HepG2 (cell line): ENCODE measurements at regions of chr14 and their contacts with region 1.

Region 1: DNA sequence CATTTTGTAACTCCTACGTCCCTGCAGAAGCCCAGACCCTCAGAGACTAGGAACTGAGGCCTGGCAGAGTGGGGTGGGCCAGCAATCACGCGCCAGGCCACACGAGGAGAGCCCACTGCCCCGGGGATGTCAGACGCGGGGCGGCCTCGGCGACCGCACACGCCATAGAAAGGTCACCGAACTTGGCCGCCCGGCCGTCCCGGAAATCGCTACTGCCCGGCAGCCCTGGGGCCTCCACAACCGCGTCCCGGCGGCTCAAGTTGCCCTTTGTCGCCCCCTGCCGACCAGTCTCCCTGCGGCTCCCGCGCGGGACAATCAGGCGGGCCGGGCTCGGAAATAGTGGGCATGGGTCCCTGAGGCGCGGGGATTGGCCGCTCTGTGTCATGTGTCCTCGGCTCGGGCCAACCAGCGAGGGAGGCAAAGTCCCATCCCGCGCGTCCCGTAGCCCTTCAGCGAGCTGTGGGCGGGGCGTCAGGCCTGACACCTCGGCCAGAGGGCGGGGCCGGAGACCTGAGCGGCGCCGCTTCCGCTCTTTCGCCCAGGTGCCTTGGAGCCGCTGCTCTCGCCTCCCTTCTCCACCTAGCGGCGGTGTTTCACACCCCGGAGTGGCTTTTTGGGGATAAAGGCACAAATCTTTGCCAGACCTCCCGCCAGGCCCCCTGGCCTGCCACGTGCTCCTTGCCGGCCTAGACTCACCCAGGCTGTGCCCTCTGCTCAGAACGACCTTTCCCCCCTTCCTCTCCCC is 33.4 kb upstream of the DEGS2 start:
- DNase-seq: peak; percentile 96
- ATAC-seq: peak; percentile 98
- H3K4me3 ChIP-seq: peak overlapping the region; percentile 64 to 80 (median 64)
- H3K27ac ChIP-seq: peak overlapping the region; percentile 76
- H3K4me1 ChIP-seq: peaks cover 45% of the 10 kb centered on the region
- H3K27me3 ChIP-seq: no peaks in the 10 kb centered on the region
- CTCF ChIP-seq: peak; percentile 93
- EP300 ChIP-seq: peak in 1 of 2 experiments; percentile 9; a peak in 1 of 4 replicates
- POLR2A ChIP-seq: peak; percentile 67 to 72
- RAD21 ChIP-seq: peak; percentile 97

Region 2: GRCh38 chr14:100140452-100141078 is 52.3 kb before region 1 on chr14:
- CTCF ChIA-PET with region 1: interaction called, 10 read pairs
- POLR2A ChIA-PET with region 1: interaction called, 10 read pairs
- in situ Hi-C with region 1: loop called (anchors 5 kb)
- intact Hi-C with region 1: loop called (anchors 1 kb)
- DNase-seq: peak; percentile 82
- ATAC-seq: peak; percentile 73
- H3K4me3 ChIP-seq: peak overlapping the region in 1 of 3 experiments; percentile 62; a peak in 3 of 6 replicates
- H3K27ac ChIP-seq: peak overlapping the region; percentile 62
- H3K4me1 ChIP-seq: peaks cover 53% of the 10 kb centered on the region
- H3K27me3 ChIP-seq: no peaks in the 10 kb centered on the region
- CTCF ChIP-seq: peak; percentile 81
- EP300 ChIP-seq: peak in 1 of 2 experiments; percentile 5; a peak in 1 of 4 replicates
- POLR2A ChIP-seq: no peak
- RAD21 ChIP-seq: peak; percentile 83

Region 3: GRCh38 chr14:100155042-100155846 is 37.6 kb before region 1 on chr14:
- CTCF ChIA-PET with region 1: interaction called, 3 read pairs
- POLR2A ChIA-PET with region 1: interaction called, 14 read pairs
- in situ Hi-C with region 1: no loop called
- intact Hi-C with region 1: no loop called
- DNase-seq: peak; percentile 46
- ATAC-seq: peak; percentile 56
- H3K4me3 ChIP-seq: peak overlapping the region in 2 of 3 experiments; percentile 17 to 49; a peak in 4 of 6 replicates
- H3K27ac ChIP-seq: no peak overlapping the region
- H3K4me1 ChIP-seq: peaks cover 39% of the 10 kb centered on the region
- H3K27me3 ChIP-seq: peaks cover 7 to 25% of the 10 kb centered on the region in 2 experiments
- CTCF ChIP-seq: peak; percentile 87
- EP300 ChIP-seq: no peak
- POLR2A ChIP-seq: no peak
- RAD21 ChIP-seq: peak; percentile 78

Region 4: GRCh38 chr14:100213956-100214774 is 21.3 kb after region 1 on chr14:
- CTCF ChIA-PET with region 1: no interaction called
- POLR2A ChIA-PET with region 1: interaction called, 31 read pairs
- in situ Hi-C with region 1: no loop called
- intact Hi-C with region 1: no loop called
- DNase-seq: peak; percentile 85
- ATAC-seq: peak; percentile 95
- H3K4me3 ChIP-seq: peak overlapping the region; percentile 73 to 90 (median 88)
- H3K27ac ChIP-seq: peak overlapping the region; percentile 99
- H3K4me1 ChIP-seq: peaks cover 30% of the 10 kb centered on the region
- H3K27me3 ChIP-seq: no peaks in the 10 kb centered on the region
- CTCF ChIP-seq: no peak
- EP300 ChIP-seq: no peak
- POLR2A ChIP-seq: peak; percentile 87 to 97
- RAD21 ChIP-seq: peak; percentile 50; the same call in 1 of the 2 replicates

Region 5: GRCh38 chr14:100239840-100240724 is 47.2 kb after region 1 on chr14:
- CTCF ChIA-PET with region 1: interaction called, 3 read pairs
- POLR2A ChIA-PET with region 1: interaction called, 6 read pairs
- in situ Hi-C with region 1: no loop called
- intact Hi-C with region 1: loop called (anchors 1 kb)
- DNase-seq: peak; percentile 75
- ATAC-seq: peak; percentile 78
- H3K4me3 ChIP-seq: peak overlapping the region; percentile 69 to 98 (median 96)
- H3K27ac ChIP-seq: peak overlapping the region; percentile 85
- H3K4me1 ChIP-seq: peaks cover 62% of the 10 kb centered on the region
- H3K27me3 ChIP-seq: no peaks in the 10 kb centered on the region; a peak in 1 of 5 replicates
- CTCF ChIP-seq: peak; percentile 67
- EP300 ChIP-seq: no peak
- POLR2A ChIP-seq: peak; percentile 56
- RAD21 ChIP-seq: no peak